Uterus (tissue), 4 donors: ENCODE measurements at regions of chr2 and their contacts with region 1.

Region 1: GRCh38 chr2:70069049-70069448 is 18.2 kb upstream of the PCBP1 start:
- DNase-seq: no peak
- H3K4me3 ChIP-seq: no peak overlapping the region
- H3K27ac ChIP-seq: peak overlapping the region; percentile 72 to 84
- H3K4me1 ChIP-seq: peaks cover 0 to 4% of the 10 kb centered on the region in 2 donors
- H3K27me3 ChIP-seq: no peaks in the 10 kb centered on the region
- CTCF ChIP-seq: no peak
- POLR2A ChIP-seq: no peak

Region 2: GRCh38 chr2:69914170-69914960 is 154.7 kb before region 1 on chr2:
- intact Hi-C with region 1: loop called (anchors 10 kb)
- DNase-seq: peak; percentile 99 to 100
- H3K4me3 ChIP-seq: peak overlapping the region; percentile 64 to 78
- H3K27ac ChIP-seq: peak overlapping the region; percentile 97 to 98
- H3K4me1 ChIP-seq: no peaks in the 10 kb centered on the region
- H3K27me3 ChIP-seq: no peaks in the 10 kb centered on the region
- CTCF ChIP-seq: peak in 2 of 4 experiments; percentile 22 to 30
- POLR2A ChIP-seq: peak; percentile 91 to 99